ENCODE measurements at regions of chr10 and their contacts with region 1.

Region 1: DNA sequence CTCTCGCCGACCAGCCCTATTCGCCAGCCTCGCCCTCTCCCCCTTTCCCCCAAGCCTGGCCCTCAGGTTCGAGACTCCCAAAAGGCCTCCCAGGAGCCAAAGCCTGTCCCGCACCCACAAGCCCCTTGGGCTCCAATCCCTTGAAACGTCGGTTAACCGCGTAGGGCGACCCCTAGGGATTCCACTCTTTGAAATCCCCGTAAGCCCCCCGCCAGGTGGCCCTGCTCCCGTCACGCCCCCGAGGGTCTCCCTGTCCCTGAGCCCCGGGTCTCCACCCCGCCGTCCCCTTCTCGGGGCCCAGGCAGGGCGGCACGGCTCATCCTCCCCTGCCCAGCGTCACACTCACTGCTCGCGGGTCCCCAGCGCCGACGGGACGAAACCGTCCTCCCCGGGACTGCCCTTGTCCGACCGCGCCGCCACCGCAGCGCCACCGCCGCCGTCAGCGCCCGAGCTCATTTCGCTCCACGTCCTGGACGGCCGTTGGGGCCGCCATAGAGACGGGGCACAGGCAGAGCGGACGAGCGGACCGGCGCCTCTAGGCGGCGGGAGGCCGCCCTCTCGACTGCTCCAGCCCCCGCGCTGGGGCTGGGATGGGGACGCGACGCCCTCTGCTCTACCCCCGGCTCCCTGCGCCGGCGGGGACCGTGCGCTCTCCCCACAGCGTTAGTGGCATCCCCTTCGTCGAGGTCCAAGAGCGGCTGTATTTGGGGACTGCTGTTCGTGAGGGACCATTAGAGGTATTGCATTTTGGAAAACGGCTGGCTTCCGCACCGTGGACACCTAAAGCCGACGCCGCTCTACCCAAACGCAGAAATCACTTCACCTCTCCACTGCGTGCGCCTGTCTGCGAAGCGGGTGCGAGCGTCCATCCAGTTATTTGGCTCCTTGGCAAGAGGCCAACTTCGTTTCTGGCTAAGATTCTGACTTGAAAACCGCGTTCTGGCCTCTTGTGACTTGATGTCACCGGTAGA is at the start of gene EEF1AKMT2:
- DNase-seq: peak; percentile 81 to 90
- ATAC-seq: peak; percentile 96 to 98 (median 96)
- H3K4me3 ChIP-seq: peak within 1 kb of the TSS; percentile 98
- H3K4me3 Mint-ChIP-seq: peak within 1 kb of the TSS; percentile 98
- H3K27ac ChIP-seq: peak within 1 kb of the TSS; percentile 84
- H3K27ac Mint-ChIP-seq: peak within 1 kb of the TSS; percentile 91 to 98
- H3K4me1 ChIP-seq: peaks cover 24% of the 10 kb centered on the region
- H3K4me1 Mint-ChIP-seq: peaks cover 23 to 26% of the 10 kb centered on the region in 2 donors
- H3K27me3 ChIP-seq: no peaks in the 10 kb centered on the region
- H3K27me3 Mint-ChIP-seq: no peaks in the 10 kb centered on the region
- CTCF ChIP-seq: peak; percentile 31
- total RNA-seq, gene EEF1AKMT2: 12.5 to 20.6 (median 20.1) TPM

Region 2: DNA sequence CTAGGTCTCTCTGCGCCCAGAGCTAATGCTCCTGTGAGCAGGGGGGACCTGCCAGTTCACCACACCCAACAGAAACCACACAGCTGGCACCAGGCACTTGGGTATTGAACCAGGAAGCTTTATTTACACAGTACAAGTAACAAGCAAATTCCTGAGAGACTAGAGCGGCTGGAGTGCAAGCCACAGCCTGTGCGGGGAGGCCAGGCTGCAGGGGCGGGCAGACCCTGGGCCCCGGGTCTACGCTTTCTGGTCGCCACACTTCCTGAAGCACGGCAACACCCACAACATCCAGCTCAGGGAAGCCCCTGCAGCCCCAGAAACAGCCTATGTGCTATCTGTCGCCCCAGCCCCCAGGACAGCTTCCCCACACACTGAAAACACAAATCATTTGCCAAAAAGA is 172.5 kb before region 1 on chr10:
- intact Hi-C with region 1: loop called (anchors 5 kb)
- DNase-seq: peak; percentile 37 to 62
- ATAC-seq: peak; percentile 68 to 85 (median 71)
- H3K4me3 ChIP-seq: no peak overlapping the region
- H3K4me3 Mint-ChIP-seq: peak overlapping the region; percentile 47
- H3K27ac ChIP-seq: peak overlapping the region; percentile 82
- H3K27ac Mint-ChIP-seq: peak overlapping the region; percentile 83 to 88
- H3K4me1 ChIP-seq: peaks cover 78% of the 10 kb centered on the region
- H3K4me1 Mint-ChIP-seq: peaks cover 43 to 73% of the 10 kb centered on the region in 2 donors
- H3K27me3 ChIP-seq: no peaks in the 10 kb centered on the region
- H3K27me3 Mint-ChIP-seq: no peaks in the 10 kb centered on the region
- CTCF ChIP-seq: no peak

Region 3: GRCh38 chr10:124802313-124802675 is 10.6 kb after region 1 on chr10:
- intact Hi-C with region 1: loop called (anchors 1 kb)
- DNase-seq: peak in 1 of 2 donors; percentile 25
- ATAC-seq: peak in 1 of 3 donors; percentile 38
- H3K4me3 ChIP-seq: peak overlapping the region; percentile 70
- H3K4me3 Mint-ChIP-seq: peak overlapping the region; percentile 86
- H3K27ac ChIP-seq: peak overlapping the region; percentile 62
- H3K27ac Mint-ChIP-seq: peak overlapping the region; percentile 76 to 86
- H3K4me1 ChIP-seq: peaks cover 11% of the 10 kb centered on the region
- H3K4me1 Mint-ChIP-seq: peaks cover 7 to 9% of the 10 kb centered on the region in 2 donors
- H3K27me3 ChIP-seq: no peaks in the 10 kb centered on the region
- H3K27me3 Mint-ChIP-seq: peaks cover 7 to 8% of the 10 kb centered on the region in 2 donors
- CTCF ChIP-seq: no peak

Measured in natural killer cell (primary cell).